ENCODE measurements at regions of chr6 and their contacts with region 1.

Region 1: DNA sequence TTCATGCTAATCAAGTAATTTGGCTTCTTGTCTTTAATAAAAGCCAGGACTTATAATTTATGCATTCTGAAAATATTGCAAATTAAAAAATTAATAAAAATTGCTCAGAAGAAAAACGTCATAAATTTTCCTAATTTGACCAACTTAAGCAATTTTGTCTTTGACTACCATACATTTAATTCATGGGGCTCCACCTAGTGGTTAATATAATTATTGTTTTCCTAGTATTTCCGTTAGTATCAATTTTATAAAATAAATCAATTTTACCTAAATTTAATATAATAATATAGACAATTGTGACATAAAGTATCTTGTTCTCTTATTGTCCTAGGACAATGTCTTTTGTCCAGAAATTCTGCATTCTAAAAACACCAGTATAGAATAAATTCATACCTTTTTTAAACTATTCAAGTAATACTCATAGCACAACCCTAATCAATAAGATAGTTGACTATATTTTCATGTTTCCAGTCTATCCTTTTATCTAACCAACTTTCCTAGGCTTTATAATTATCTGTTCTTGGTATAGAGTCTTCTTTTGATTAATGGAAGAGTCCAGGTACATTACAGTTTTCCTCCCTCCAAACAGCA is 319.9 kb downstream of the TRDN start:
- DNase-seq: no peak
- H3K4me3 ChIP-seq: no peak overlapping the region
- H3K27ac ChIP-seq: no peak overlapping the region
- H3K4me1 ChIP-seq: no peaks in the 10 kb centered on the region
- H3K27me3 ChIP-seq: no peaks in the 10 kb centered on the region
- CTCF ChIP-seq: peak; percentile 40 to 71 (median 50)
- EP300 ChIP-seq: no peak
- POLR2A ChIP-seq: no peak

Region 2: GRCh38 chr6:122730775-122731386 is 585.9 kb before region 1 on chr6:
- in situ Hi-C with region 1: loop called (anchors 25 kb)
- intact Hi-C with region 1: no loop called
- DNase-seq: no peak
- H3K4me3 ChIP-seq: no peak overlapping the region
- H3K27ac ChIP-seq: no peak overlapping the region
- H3K4me1 ChIP-seq: no peaks in the 10 kb centered on the region
- H3K27me3 ChIP-seq: no peaks in the 10 kb centered on the region
- CTCF ChIP-seq: peak; percentile 67 to 78 (median 75)
- EP300 ChIP-seq: no peak
- POLR2A ChIP-seq: no peak

Region 3: DNA sequence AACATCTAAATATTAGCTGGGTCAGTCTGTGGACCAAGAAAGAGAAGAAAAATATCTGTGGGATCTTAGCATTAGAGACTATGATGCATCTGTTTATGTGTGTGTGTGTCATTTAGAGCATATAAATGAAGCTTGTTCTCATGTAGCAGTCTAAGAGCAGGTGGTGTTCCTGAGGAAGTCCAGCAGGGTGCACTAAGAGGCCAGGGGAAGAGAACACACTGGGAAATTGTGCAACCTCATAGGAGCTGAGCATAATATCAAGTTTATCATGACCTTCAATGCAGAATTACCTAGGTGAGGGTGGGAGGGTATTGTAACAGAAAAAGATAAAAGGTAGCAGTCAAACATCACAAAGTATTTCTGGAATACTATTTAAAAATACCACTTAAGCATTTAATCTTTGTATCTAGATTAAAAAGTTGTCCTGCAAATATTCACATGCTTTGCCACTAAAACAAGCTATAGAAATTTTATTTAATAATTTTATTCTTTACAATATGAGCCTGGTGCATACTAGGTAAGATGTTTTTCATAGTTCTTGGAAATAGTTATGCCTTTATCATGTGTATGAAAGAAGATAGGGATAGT is 447.3 kb before region 1 on chr6:
- in situ Hi-C with region 1: loop called (anchors 10 to 25 kb)
- intact Hi-C with region 1: no loop called
- DNase-seq: peak; percentile 25
- H3K4me3 ChIP-seq: no peak overlapping the region
- H3K27ac ChIP-seq: no peak overlapping the region
- H3K4me1 ChIP-seq: no peaks in the 10 kb centered on the region
- H3K27me3 ChIP-seq: peaks cover 9% of the 10 kb centered on the region
- CTCF ChIP-seq: peak; percentile 43 to 61 (median 54)
- EP300 ChIP-seq: no peak
- POLR2A ChIP-seq: no peak

Region 4: GRCh38 chr6:123288649-123289048 is 28.2 kb before region 1 on chr6:
- in situ Hi-C with region 1: no loop called
- intact Hi-C with region 1: no loop called
- DNase-seq: no peak
- H3K4me3 ChIP-seq: no peak overlapping the region
- H3K27ac ChIP-seq: no peak overlapping the region
- H3K4me1 ChIP-seq: no peaks in the 10 kb centered on the region
- H3K27me3 ChIP-seq: no peaks in the 10 kb centered on the region
- CTCF ChIP-seq: no peak
- EP300 ChIP-seq: no peak
- POLR2A ChIP-seq: no peak